ENCODE measurements at regions of chr7 and their contacts with region 1.

Region 1: DNA sequence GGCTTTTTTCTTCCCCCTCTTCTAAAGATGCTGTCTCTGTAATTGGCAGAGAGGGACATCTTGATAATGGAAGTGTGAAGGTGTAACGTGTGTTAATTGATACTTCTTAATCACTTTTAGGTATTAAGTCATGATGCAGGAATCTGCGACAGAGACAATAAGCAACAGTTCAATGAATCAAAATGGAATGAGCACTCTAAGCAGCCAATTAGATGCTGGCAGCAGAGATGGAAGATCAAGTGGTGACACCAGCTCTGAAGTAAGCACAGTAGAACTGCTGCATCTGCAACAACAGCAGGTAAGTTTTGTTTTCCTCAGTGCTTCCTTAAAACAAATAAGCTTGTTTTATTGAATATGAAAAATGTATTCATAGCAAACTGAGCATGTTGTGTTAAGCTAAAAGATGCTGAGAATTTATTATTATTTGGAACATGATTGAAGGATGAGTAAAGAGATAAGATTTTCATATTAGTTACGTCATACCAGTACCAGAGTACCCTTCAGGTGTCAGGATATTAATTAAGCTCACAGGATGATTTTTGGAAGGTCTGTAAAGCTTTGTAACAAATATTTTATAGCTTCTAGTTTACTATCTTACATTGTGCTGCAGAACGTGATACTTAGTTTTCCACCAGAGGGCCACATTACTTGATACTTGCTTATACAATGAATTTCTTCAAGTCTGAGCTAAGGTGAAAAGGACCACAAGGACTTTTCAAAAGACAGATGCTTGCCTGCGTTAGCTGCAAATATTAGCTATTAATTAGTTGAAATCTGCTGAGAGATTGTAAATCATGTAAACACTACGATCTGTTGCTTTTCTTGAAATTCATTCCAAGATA is 12.0 kb downstream of the FOXP2 start:
- DNase-seq: no peak
- ATAC-seq: no peak
- H3K4me3 ChIP-seq: no peak overlapping the region
- H3K27ac ChIP-seq: no peak overlapping the region
- H3K4me1 ChIP-seq: no peaks in the 10 kb centered on the region
- H3K27me3 ChIP-seq: no peaks in the 10 kb centered on the region
- CTCF ChIP-seq: peak in 6 of 9 donors; percentile 9 to 46 (median 36)

Region 2: GRCh38 chr7:114663502-114663901 is 236.9 kb after region 1 on chr7:
- intact Hi-C with region 1: loop called in 1 of 10 experiments (anchors 5 kb)
- DNase-seq: no peak
- ATAC-seq: no peak
- H3K4me3 ChIP-seq: no peak overlapping the region
- H3K27ac ChIP-seq: no peak overlapping the region
- H3K4me1 ChIP-seq: peaks cover 0 to 10% (median 0%) of the 10 kb centered on the region in 9 donors
- H3K27me3 ChIP-seq: no peaks in the 10 kb centered on the region
- CTCF ChIP-seq: peak in 4 of 9 donors; percentile 20 to 35 (median 26)